Activated CD4-positive, alpha-beta T cell treated with anti-CD3 and anti-CD28 coated beads for 36 hours (primary cell): ENCODE measurements at regions of chr22 and their contacts with region 1.

Region 1: GRCh38 chr22:27654546-27655445 is 146.8 kb downstream of the MN1 start:
- DNase-seq: no peak
- ATAC-seq: no peak
- H3K4me3 Mint-ChIP-seq: no peak overlapping the region
- H3K27ac Mint-ChIP-seq: no peak overlapping the region
- H3K4me1 Mint-ChIP-seq: no peaks in the 10 kb centered on the region
- H3K27me3 Mint-ChIP-seq: peaks cover 4% of the 10 kb centered on the region

Region 2: DNA sequence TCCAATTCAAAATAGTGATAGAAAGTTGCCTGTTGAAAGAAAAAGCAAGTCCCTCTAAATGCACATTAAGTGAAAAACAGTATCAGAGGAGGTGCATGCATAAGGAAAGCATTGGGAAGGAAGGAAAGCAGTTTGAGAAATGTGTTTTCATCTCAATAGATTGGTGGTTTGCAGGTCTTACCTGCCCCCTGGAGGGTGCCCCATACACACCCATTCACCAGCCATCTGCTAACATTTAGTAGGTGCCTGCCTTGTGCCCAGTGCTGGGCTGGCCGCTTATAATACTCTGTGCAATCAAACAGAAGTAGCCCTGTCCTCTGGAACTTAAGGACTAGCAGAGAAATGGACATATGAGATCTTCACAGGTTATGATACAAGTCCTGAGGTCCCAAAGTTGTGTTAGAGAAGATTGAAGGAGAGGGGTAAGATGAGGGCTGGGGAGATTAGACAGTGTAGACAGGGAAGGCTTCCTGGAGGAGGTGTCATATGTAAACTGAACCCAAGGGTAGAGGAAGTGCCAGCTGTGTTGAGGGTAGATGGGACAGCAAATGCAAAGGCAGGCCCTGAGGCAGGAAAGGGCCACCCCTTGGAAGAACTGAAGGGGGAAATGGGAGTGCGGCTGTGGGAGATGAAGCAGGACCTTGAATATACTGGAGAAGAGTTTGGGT is 37.4 kb before region 1 on chr22:
- CTCF ChIA-PET with region 1: no interaction called
- POLR2A ChIA-PET with region 1: no interaction called
- intact Hi-C with region 1: no loop called
- DNase-seq: no peak
- ATAC-seq: no peak
- H3K4me3 Mint-ChIP-seq: no peak overlapping the region
- H3K27ac Mint-ChIP-seq: no peak overlapping the region
- H3K4me1 Mint-ChIP-seq: no peaks in the 10 kb centered on the region
- H3K27me3 Mint-ChIP-seq: peaks cover 26% of the 10 kb centered on the region

Region 3: DNA sequence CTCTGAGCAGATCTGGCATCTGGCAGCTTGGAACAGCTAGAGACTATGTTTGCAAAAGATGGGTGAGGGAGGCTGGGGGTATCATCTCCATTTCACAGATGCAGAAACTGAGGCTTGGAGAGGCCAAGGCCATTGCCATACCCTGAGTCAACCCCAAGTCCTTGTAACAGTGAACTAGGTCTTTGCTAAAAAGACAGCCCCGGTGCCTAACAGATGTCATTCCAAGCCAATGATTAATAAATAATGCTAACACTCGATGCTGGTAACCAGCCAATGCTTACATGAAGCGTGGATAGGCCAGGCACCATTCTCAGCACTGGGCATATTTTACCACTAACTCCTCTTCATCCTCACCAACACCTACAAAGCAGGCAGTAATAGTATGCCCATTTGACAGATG is 17.2 kb before region 1 on chr22:
- CTCF ChIA-PET with region 1: no interaction called
- POLR2A ChIA-PET with region 1: no interaction called
- intact Hi-C with region 1: no loop called
- DNase-seq: no peak
- ATAC-seq: no peak
- H3K4me3 Mint-ChIP-seq: no peak overlapping the region
- H3K27ac Mint-ChIP-seq: no peak overlapping the region
- H3K4me1 Mint-ChIP-seq: no peaks in the 10 kb centered on the region
- H3K27me3 Mint-ChIP-seq: peaks cover 15% of the 10 kb centered on the region

Region 4: GRCh38 chr22:27718186-27719032 is 63.6 kb after region 1 on chr22:
- CTCF ChIA-PET with region 1: no interaction called
- POLR2A ChIA-PET with region 1: no interaction called
- intact Hi-C with region 1: loop called in 1 of 2 experiments (anchors 10 kb)
- DNase-seq: no peak
- ATAC-seq: no peak
- H3K4me3 Mint-ChIP-seq: no peak overlapping the region
- H3K27ac Mint-ChIP-seq: no peak overlapping the region
- H3K4me1 Mint-ChIP-seq: no peaks in the 10 kb centered on the region
- H3K27me3 Mint-ChIP-seq: peaks cover 8% of the 10 kb centered on the region

Region 5: DNA sequence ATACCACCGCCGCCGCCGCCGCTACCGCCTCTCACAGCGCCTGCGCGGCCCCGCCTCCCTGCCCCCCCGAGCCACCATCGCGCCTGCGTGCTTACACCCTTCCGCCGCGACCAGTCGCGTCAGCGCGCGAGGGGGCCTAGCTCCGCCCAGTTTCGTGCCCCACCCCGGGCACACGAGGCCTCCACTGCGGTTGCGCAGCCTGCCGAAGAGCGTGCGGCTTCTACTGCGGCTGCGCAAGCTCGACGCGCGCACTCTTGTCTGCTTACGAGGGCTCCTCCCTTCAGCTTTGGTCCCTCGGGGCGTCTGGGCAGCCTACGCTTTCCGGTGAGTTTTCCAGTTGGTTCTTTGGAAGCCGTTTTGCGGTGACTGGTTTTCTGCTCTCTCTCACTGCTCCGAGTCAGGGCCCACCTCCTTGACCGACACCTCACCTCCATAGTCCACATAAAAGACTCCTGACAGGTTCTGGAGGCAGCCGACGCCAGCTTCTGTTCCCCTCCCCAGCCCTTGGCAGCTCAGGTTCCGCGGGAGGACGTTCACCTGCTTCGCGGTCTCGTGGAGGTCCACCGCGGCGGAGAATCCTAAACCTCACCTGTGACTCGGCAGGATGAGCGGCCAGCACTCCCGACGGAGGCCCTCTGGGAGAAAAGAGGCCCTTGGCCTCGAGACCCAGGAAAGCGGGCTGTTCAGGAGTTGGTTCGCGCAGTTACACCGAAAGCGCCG is 264.6 kb after region 1 on chr22 and contains the start of gene PITPNB:
- CTCF ChIA-PET with region 1: no interaction called
- POLR2A ChIA-PET with region 1: no interaction called
- intact Hi-C with region 1: no loop called
- DNase-seq: peak; percentile 99
- ATAC-seq: peak; percentile 93
- H3K4me3 Mint-ChIP-seq: peak within 1 kb of the TSS; percentile 97
- H3K27ac Mint-ChIP-seq: peak within 1 kb of the TSS; percentile 98
- H3K4me1 Mint-ChIP-seq: peaks cover 56% of the 10 kb centered on the region
- H3K27me3 Mint-ChIP-seq: no peaks in the 10 kb centered on the region
- total RNA-seq, gene PITPNB: 96.5 to 111 TPM